Dorsolateral prefrontal cortex (tissue), 120 donors: ENCODE measurements at regions of chr5 and their contacts with region 1.

Region 1: DNA sequence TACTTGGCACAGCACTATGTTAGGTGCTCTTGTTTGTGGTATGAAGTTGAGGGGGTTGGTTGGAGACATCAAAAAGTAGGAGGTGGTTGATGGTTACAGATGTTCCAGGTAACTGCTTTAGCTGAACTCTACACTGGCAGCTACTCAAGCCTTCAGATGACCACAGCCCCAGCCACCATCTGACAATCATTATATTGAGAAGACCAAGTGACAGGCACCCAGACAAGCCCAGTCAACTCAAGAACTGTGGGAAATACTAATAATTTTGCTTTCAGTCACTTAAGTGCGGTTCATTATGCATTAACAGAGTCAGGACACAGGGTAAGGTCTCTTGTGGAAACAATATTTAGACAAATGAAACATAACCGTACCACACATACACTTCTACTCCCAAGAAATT is 38.9 kb upstream of the SLIT3 start:
- DNase-seq: no peak
- H3K4me3 ChIP-seq: no peak overlapping the region
- H3K27ac ChIP-seq: no peak overlapping the region
- H3K27me3 ChIP-seq: peaks cover 0 to 27% (median 3%) of the 10 kb centered on the region in 45 donors
- CTCF ChIP-seq: no peak

Region 2: GRCh38 chr5:169318556-169318955 is 21.3 kb before region 1 on chr5:
- intact Hi-C with region 1: no loop called
- DNase-seq: no peak
- H3K4me3 ChIP-seq: no peak overlapping the region
- H3K27ac ChIP-seq: no peak overlapping the region
- H3K27me3 ChIP-seq: peaks cover 0 to 11% (median 0%) of the 10 kb centered on the region in 45 donors
- CTCF ChIP-seq: no peak

Region 3: DNA sequence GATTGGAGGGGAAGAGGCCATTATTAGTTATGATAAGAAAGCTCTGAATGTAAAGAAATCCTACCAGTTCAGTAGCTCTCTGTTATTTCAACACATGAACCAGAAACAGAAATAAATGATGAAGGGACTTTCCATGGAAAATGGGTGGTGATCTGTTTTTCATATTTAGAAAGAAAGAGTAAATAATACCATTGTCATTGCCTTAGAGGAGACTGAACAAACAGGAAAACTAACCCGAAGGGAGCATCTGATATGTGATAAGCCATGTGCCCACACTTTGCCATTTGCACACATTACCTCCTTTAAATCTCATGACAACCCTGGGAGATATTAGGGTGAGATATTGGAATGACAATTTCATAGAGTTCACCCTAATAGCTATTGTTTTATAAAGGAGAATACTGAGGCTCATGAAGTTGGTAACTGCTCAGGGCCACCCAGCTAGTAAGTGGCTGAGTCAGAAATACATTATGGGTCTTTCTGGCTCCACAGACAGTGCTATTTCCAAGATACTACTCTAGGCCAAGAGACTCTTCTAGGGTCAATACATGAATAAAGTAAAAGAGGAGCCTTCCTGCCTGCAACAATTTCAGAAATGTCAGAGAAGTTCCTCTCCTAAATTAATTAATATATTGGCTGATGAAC is 72.0 kb after region 1 on chr5:
- intact Hi-C with region 1: loop called in 1 of 2 experiments (anchors 1 kb)
- DNase-seq: no peak
- H3K4me3 ChIP-seq: no peak overlapping the region
- H3K27ac ChIP-seq: no peak overlapping the region
- H3K27me3 ChIP-seq: no peaks in the 10 kb centered on the region
- CTCF ChIP-seq: no peak